ENCODE measurements at regions of chr2 and their contacts with region 1.

Region 1: GRCh38 chr2:153519257-153519875 is 40.8 kb upstream of the RPRM start:
- DNase-seq: peak; percentile 54
- H3K4me3 ChIP-seq: no peak overlapping the region
- H3K27ac ChIP-seq: no peak overlapping the region
- H3K4me1 ChIP-seq: no peaks in the 10 kb centered on the region
- H3K27me3 ChIP-seq: no peaks in the 10 kb centered on the region
- CTCF ChIP-seq: peak; percentile 66 to 85 (median 77)
- EP300 ChIP-seq: no peak
- POLR2A ChIP-seq: no peak

Region 2: DNA sequence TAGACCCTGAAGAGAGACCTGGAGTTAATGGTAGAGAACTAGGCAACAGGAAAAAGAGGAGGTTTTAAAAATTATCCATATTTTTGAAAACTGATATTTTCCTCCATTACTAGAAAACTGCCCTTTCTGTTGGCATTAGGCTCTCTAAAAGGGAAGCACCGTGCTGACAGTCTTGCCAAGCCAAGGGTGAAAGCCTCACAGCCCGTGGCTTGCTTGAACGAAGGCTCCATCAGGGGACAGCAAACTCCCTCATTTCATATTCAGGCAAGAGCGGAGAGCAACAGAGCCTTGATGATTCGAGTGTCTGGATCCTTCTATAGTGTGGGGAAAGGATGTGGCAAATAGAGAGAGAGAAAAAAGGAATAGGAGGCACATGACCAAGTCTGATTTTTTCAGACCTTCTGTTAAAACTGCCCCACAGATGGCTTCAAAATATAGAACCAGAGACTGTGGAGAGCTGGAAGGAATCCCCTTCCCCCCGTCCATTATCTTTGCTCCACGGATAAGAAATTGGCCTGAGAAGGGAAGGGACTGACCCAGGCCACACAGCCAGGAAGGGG is 1487.5 kb before region 1 on chr2:
- in situ Hi-C with region 1: no loop called
- intact Hi-C with region 1: loop called (anchors 5 kb)
- DNase-seq: no peak
- H3K4me3 ChIP-seq: no peak overlapping the region
- H3K27ac ChIP-seq: no peak overlapping the region
- H3K4me1 ChIP-seq: no peaks in the 10 kb centered on the region
- H3K27me3 ChIP-seq: no peaks in the 10 kb centered on the region
- CTCF ChIP-seq: no peak
- EP300 ChIP-seq: no peak
- POLR2A ChIP-seq: no peak

Region 3: GRCh38 chr2:152740743-152741328 is 778.5 kb before region 1 on chr2:
- in situ Hi-C with region 1: loop called in 1 of 4 experiments (anchors 25 kb)
- intact Hi-C with region 1: no loop called
- DNase-seq: no peak
- H3K4me3 ChIP-seq: no peak overlapping the region
- H3K27ac ChIP-seq: no peak overlapping the region
- H3K4me1 ChIP-seq: no peaks in the 10 kb centered on the region
- H3K27me3 ChIP-seq: no peaks in the 10 kb centered on the region
- CTCF ChIP-seq: peak; percentile 68 to 92 (median 79)
- EP300 ChIP-seq: no peak
- POLR2A ChIP-seq: no peak

Region 4: GRCh38 chr2:152755029-152755428 is 764.3 kb before region 1 on chr2:
- in situ Hi-C with region 1: loop called in 1 of 4 experiments (anchors 25 kb)
- intact Hi-C with region 1: no loop called
- DNase-seq: no peak
- H3K4me3 ChIP-seq: no peak overlapping the region
- H3K27ac ChIP-seq: no peak overlapping the region
- H3K4me1 ChIP-seq: no peaks in the 10 kb centered on the region
- H3K27me3 ChIP-seq: no peaks in the 10 kb centered on the region
- CTCF ChIP-seq: peak in 4 of 5 experiments; percentile 10 to 29 (median 22)
- EP300 ChIP-seq: no peak
- POLR2A ChIP-seq: no peak

Region 5: GRCh38 chr2:152925547-152926327 is 593.6 kb before region 1 on chr2:
- in situ Hi-C with region 1: loop called in 2 of 4 experiments (anchors 25 kb)
- intact Hi-C with region 1: no loop called
- DNase-seq: peak; percentile 72
- H3K4me3 ChIP-seq: no peak overlapping the region
- H3K27ac ChIP-seq: no peak overlapping the region
- H3K4me1 ChIP-seq: no peaks in the 10 kb centered on the region
- H3K27me3 ChIP-seq: no peaks in the 10 kb centered on the region
- CTCF ChIP-seq: peak; percentile 56 to 80 (median 74)
- EP300 ChIP-seq: no peak
- POLR2A ChIP-seq: no peak

Region 6: DNA sequence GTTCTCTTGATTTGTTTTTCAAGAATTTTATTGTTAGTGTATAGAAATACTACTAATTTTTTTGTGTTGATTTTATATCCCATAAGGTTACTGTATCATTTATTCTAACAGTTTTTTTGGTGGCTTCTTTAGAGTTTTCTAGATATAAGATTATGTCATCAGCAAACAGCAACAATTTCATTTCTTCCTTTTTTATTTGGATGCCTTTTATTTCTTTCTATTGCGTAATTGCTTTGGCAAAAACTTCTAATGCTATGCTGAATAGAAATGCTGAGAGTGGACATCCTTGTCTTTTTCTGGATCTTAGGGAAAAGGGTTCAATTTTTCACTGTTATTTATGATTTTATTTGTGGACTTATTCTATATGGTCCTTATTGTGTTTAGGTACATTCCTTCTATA is 339.6 kb before region 1 on chr2:
- in situ Hi-C with region 1: no loop called
- intact Hi-C with region 1: no loop called
- DNase-seq: no peak
- H3K4me3 ChIP-seq: no peak overlapping the region
- H3K27ac ChIP-seq: no peak overlapping the region
- H3K4me1 ChIP-seq: no peaks in the 10 kb centered on the region
- H3K27me3 ChIP-seq: no peaks in the 10 kb centered on the region
- CTCF ChIP-seq: no peak
- EP300 ChIP-seq: no peak
- POLR2A ChIP-seq: no peak

Region 7: DNA sequence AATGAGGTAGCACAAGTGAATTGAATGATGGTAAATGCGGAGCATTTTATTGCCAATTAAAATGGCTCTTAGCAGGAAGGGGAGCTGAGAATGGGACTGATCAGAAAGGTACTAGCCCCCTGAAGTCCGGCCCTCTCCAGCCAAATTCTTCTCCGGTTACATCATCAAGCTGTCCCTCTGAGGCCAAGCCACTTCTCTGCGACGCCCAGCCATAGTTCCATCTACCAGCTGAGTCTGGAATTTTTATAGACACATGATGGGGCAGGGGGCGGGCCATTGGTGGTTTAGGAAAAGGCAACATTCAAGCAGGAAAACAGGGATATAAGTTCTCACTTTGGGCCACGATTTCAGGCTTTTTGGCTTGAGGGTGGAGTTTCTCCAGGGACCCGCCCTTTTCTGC is 63.5 kb before region 1 on chr2:
- in situ Hi-C with region 1: no loop called
- intact Hi-C with region 1: no loop called
- DNase-seq: no peak
- H3K4me3 ChIP-seq: no peak overlapping the region
- H3K27ac ChIP-seq: no peak overlapping the region
- H3K4me1 ChIP-seq: no peaks in the 10 kb centered on the region
- H3K27me3 ChIP-seq: no peaks in the 10 kb centered on the region
- CTCF ChIP-seq: no peak
- EP300 ChIP-seq: no peak
- POLR2A ChIP-seq: no peak

Region 8: GRCh38 chr2:153557211-153557610 is 37.8 kb after region 1 on chr2:
- in situ Hi-C with region 1: no loop called
- intact Hi-C with region 1: no loop called
- DNase-seq: no peak
- H3K4me3 ChIP-seq: no peak overlapping the region
- H3K27ac ChIP-seq: no peak overlapping the region
- H3K4me1 ChIP-seq: no peaks in the 10 kb centered on the region
- H3K27me3 ChIP-seq: no peaks in the 10 kb centered on the region
- CTCF ChIP-seq: no peak
- EP300 ChIP-seq: no peak
- POLR2A ChIP-seq: no peak